ENCODE measurements at regions of chr2 and their contacts with region 1.

Region 1: DNA sequence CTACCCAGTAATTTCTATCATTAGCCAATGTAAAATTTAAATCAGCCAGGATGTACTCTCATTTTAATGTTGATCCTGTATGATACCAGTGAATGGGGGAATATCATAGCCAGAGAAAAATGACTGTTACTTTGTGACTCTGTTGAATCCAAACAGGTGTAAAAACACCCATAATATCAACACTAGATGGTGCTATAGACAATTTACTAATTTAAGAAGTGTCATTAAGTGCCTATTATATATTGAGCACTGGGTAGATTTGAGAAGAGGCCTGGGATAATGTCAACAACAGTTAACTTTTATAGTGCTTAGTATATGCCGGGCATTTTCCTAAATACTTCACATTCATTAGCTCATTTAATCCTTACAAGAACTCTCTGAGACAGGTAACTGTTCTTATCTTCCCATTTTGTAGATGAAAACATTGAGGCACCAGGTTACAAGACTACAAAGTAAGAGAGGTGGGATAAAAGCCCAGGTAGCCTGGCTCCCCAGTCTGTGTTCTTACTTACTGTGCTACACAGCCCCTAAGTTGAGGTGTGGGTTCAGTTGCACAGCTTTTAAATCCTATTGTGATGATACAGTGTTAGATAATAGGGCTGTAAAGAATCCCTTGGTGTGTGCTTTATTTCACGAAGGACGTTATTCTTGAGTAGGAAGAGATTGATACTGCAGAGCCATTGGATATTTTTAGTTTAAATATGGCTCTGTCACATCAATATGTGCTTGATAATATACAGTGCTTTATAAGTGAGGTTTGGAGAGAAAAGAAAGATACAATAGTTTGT is 325.5 kb downstream of the AGPS start:
- DNase-seq: no peak
- ATAC-seq: no peak
- H3K4me3 ChIP-seq: no peak overlapping the region
- H3K27ac ChIP-seq: no peak overlapping the region
- H3K4me1 ChIP-seq: no peaks in the 10 kb centered on the region
- H3K27me3 ChIP-seq: peaks cover 2% of the 10 kb centered on the region
- CTCF ChIP-seq: no peak
- POLR2A ChIP-seq: no peak
- RAD21 ChIP-seq: no peak

Region 2: GRCh38 chr2:177419274-177419673 is 298.8 kb before region 1 on chr2:
- CTCF ChIA-PET with region 1: no interaction called
- POLR2A ChIA-PET with region 1: interaction called, 13 read pairs
- dilution Hi-C with region 1: no loop called
- in situ Hi-C with region 1: no loop called
- intact Hi-C with region 1: loop called (anchors 5 kb)
- DNase-seq: peak; percentile 61
- ATAC-seq: no peak
- H3K4me3 ChIP-seq: no peak overlapping the region
- H3K27ac ChIP-seq: no peak overlapping the region
- H3K4me1 ChIP-seq: no peaks in the 10 kb centered on the region
- H3K27me3 ChIP-seq: no peaks in the 10 kb centered on the region
- CTCF ChIP-seq: no peak
- POLR2A ChIP-seq: no peak
- RAD21 ChIP-seq: no peak

Region 3: DNA sequence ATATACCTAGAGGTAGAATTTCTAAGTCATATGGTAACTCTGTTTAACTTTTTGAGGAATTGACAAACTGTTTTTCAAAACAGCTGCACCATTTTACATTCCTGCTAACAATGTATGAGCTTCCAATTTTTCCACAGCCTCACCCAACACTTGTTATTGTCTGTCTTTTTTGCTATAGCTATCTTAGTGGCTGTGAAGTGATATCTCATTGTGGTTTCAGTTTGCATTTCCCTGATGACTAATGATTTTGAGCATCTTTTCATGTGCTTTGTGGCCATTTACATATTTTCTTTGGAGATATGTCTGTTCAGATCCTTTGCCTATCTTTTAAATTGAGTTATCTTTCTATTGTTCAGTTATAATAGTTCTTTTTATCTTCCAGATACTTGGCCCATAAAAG is 51.6 kb before region 1 on chr2:
- CTCF ChIA-PET with region 1: no interaction called
- POLR2A ChIA-PET with region 1: no interaction called
- dilution Hi-C with region 1: no loop called
- in situ Hi-C with region 1: no loop called
- intact Hi-C with region 1: loop called (anchors 1 kb)
- DNase-seq: peak; percentile 1
- ATAC-seq: no peak
- H3K4me3 ChIP-seq: no peak overlapping the region
- H3K27ac ChIP-seq: no peak overlapping the region
- H3K4me1 ChIP-seq: no peaks in the 10 kb centered on the region
- H3K27me3 ChIP-seq: no peaks in the 10 kb centered on the region
- CTCF ChIP-seq: no peak
- POLR2A ChIP-seq: no peak
- RAD21 ChIP-seq: no peak

Region 4: DNA sequence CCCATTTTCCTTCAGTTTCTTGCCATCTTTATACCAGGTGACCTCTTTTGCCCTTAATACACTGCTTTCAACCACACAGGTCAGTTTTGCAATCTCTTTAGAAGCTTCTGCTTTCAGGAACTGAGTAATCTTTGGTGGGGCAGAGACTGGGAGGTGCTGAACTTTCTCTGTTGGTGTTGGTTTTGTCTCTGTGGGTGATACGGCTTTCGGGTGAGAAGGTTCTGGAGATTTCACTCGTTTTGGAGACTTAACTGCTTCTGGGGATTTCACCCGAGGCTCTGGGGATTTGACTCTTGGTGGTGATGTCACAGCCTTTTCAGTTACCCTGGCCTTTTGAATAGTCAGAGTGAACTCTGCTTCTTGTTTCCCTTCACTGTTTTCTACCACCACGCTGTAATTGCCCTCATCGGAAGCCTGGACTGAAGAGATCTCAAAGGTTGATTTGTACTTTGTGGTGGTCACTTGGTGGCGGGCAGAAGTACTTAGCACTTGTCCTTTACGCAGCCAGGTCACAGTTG is 812.7 kb after region 1 on chr2:
- CTCF ChIA-PET with region 1: no interaction called
- POLR2A ChIA-PET with region 1: no interaction called
- dilution Hi-C with region 1: no loop called
- in situ Hi-C with region 1: no loop called
- intact Hi-C with region 1: no loop called
- DNase-seq: no peak
- ATAC-seq: no peak
- H3K4me3 ChIP-seq: no peak overlapping the region
- H3K27ac ChIP-seq: no peak overlapping the region
- H3K4me1 ChIP-seq: no peaks in the 10 kb centered on the region
- H3K27me3 ChIP-seq: no peaks in the 10 kb centered on the region
- CTCF ChIP-seq: no peak
- POLR2A ChIP-seq: no peak
- RAD21 ChIP-seq: no peak